ENCODE measurements at regions of chr2 and their contacts with region 1.

Region 1: DNA sequence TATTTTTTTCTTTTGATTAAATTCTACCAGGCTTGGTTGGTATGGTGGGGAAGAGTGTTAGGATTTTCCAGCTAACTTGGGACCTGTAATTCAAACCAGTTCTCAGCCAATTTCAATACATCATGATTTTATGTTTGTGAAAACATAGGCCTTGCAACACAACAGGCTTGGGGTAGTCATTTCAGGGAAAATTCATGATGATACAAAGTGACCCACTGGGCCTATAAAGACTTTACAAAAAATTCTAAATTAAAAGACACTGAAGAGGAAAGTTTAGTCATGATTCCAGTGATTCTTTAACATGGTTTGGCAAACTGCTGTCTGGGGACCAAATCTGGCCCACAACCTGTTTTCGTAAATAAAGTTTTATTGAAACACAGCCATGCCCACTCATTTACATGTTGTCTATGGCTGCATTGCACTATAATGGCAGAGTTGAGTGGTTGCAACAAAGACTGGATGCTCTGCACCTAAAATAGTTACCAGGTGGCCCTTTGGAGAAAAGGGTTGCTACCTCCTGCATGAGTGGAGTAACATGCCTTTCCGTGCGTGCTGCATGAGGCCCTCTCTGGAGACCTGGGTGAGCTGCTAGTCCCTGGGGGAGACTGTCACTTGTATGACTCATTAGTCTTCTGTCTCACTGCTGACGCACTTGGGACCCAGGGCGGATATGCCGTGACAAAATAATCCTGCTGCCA is 73.6 kb downstream of the NPAS2 start:
- DNase-seq: no peak

Region 2: GRCh38 chr2:100924520-100925451 is 31.2 kb after region 1 on chr2:
- intact Hi-C with region 1: loop called (anchors 2 kb)
- DNase-seq: no peak

Region 3: DNA sequence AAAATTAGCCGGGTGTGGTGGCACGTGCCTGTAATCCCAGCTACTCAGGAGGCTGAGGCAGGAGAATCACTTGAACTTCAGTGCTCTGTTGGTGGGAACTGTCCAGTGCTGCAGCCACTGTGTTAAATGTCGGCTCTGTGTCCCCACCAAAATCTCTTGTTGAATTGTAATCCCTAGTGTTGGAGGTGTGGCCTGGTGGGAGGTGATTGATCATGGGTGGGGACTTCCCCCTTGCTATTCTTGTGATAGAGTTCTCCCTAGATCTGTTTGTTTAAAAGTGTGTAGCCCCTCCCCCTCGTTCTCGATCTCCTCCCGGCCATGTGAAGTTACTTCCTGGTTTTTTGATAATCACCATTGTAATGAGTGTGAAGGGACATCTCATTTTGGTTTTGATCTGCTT is 98.7 kb after region 1 on chr2:
- intact Hi-C with region 1: no loop called
- DNase-seq: no peak

Measured in cardiac septum (tissue), 1 donor.